ENCODE measurements at regions of chr2 and their contacts with region 1.

Region 1: GRCh38 chr2:159762075-159762474 is 35.9 kb downstream of the CD302 start:
- DNase-seq: no peak
- CTCF ChIP-seq: no peak

Region 2: DNA sequence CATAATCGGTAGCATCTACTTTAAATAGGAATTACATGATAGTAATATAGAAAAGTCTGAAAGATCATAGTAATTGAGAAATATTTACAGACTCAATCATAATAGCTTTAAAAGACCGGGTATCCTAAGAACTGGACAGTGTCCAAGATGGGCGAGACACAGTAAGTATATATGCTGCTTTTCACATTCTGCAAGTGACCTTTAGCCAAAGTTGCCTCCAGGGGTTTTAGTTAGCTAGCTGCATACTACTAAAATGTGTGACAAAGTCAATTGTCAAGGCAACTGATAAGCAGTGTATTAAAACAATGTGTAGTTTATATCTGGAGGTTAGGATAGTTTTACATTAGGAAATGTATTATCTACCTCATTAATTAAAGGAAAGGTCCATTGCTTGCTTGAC is 11.4 kb after region 1 on chr2:
- CTCF ChIA-PET with region 1: interaction called, 10 read pairs
- POLR2A ChIA-PET with region 1: no interaction called
- DNase-seq: no peak
- CTCF ChIP-seq: no peak